ENCODE measurements at regions of chr20 and their contacts with region 1.

Region 1: DNA sequence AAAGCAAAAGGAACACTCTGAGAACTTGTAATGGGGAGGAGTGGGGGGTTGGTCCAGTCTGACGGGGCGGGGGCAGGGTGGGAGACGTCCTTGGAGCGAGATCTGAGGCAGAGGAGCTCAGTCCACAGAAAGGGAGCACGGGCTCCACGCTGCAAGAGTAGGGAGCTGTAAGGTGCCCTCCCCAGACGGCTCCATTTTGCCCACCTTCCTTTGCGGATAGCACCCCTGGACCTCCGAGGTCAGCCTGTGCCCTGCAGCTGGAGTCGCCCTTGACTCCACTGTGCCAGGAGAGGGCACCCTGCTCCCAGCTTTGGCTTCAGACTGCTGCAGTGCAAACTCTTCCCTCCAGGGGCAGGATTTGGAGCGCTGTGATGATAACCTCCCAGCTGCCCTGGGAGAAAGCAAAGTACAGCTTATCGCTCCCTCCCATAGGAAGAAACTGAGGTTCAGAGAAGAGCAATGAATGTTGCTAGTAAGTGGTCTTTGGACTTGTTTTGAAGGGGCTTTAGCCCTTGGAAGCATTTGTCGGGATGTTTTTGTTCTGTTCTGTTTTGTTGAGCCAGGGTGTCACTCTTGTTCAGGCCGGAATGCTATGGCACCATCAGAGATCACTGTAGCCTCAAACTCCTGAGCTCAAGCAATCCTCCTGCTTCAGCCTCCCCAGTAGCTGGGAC is 9.5 kb upstream of the AHCY start:
- DNase-seq: peak; percentile 92
- ATAC-seq: peak; percentile 100
- H3K4me3 Mint-ChIP-seq: no peak overlapping the region
- H3K27ac Mint-ChIP-seq: no peak overlapping the region
- H3K4me1 Mint-ChIP-seq: peaks cover 17% of the 10 kb centered on the region
- H3K27me3 Mint-ChIP-seq: peaks cover 27% of the 10 kb centered on the region

Region 2: DNA sequence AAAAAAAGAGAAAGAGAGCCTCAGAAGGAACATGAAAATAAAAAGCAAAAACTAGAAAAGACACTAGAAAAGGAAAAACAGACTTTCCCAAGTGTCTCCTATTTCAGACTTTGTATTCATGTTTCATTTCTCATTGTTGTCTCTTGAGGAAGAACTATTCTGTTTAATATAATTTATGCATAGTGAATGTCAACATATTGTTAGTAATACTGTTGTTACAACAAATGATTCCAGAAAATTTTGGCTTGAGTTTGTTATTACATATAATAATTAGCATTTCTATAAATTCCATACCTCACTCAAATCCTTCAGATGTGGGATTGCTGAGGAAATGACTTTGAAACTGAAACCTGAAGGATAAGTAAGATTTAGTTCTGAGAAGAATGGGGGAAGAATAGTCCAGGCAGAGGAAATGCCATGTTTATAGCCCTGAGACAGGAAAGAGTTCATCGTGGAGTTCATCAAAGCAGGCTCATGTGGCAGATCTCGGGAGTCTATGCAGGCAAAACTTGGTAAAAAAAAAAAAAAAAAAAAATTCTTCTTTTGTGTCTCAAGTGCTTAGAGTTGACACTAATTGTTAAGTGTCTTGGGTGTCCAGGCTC is 147.6 kb before region 1 on chr20:
- CTCF ChIA-PET with region 1: no interaction called
- DNase-seq: no peak
- ATAC-seq: no peak
- H3K4me3 Mint-ChIP-seq: no peak overlapping the region
- H3K27ac Mint-ChIP-seq: no peak overlapping the region
- H3K4me1 Mint-ChIP-seq: peaks cover 4% of the 10 kb centered on the region
- H3K27me3 Mint-ChIP-seq: peaks cover 11% of the 10 kb centered on the region

Region 3: DNA sequence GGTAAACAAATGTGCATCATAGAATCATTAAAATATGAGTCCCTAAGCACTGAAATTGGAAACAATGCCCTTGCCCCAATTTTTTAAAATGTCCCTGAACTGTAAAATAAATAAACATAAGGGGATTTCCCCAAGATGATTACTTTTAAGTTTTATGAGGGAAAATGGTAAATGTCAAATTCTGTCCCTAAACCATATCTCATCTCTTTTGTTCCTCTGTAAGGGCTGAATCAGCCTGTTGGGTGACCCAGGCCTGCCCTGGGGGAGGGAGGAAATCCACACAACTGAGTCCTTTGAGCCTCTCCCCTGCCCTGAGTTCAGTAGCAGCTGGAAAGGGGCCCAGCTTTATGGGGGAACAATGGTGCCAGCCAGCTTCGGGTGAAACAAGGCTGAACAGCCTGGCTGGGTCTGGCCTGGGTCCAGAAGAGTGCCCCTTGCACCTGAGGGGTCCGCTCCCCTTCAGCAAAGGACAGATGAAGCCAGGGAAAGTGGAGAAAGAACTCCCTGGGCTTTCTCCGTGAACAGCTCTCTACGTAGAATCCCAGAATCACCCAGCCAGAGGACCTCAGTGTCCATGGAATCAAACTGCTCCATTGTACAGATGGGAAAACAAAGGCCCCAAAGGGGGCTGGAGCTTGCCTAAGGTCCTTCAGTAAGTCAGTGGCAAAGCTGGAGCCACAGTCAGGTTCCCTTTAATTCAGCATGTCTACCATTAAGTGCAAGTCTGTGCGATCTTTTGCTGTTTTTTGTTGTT is 22.1 kb after region 1 on chr20:
- CTCF ChIA-PET with region 1: interaction called, 10 read pairs
- DNase-seq: no peak
- ATAC-seq: no peak
- H3K4me3 Mint-ChIP-seq: no peak overlapping the region
- H3K27ac Mint-ChIP-seq: no peak overlapping the region
- H3K4me1 Mint-ChIP-seq: peaks cover 5% of the 10 kb centered on the region
- H3K27me3 Mint-ChIP-seq: no peaks in the 10 kb centered on the region

Region 4: GRCh38 chr20:34403908-34404307 is 91.2 kb after region 1 on chr20:
- CTCF ChIA-PET with region 1: interaction called, 21 read pairs
- DNase-seq: no peak
- ATAC-seq: no peak
- H3K4me3 Mint-ChIP-seq: no peak overlapping the region
- H3K27ac Mint-ChIP-seq: no peak overlapping the region
- H3K4me1 Mint-ChIP-seq: peaks cover 30% of the 10 kb centered on the region
- H3K27me3 Mint-ChIP-seq: no peaks in the 10 kb centered on the region

Region 5: DNA sequence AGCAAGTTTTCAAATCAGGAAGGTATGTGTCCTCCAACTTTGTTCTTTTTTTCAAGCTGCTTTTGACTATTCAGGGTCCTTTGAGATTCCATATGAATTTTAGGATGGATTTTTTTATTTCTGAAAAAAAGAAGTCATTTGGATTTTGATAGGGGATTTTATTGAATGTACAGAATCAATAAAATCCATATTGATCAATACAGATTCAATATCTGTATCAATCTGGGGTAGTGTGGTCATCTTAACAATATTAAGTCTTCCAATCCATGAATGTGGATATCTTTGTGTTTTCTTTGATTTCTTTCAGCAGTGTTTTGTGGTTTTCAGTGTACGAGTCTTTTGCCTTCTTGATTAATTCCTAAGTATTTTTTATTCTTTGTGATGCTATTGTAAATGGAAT is 152.6 kb after region 1 on chr20:
- CTCF ChIA-PET with region 1: interaction called, 16 read pairs
- DNase-seq: no peak
- ATAC-seq: no peak
- H3K4me3 Mint-ChIP-seq: no peak overlapping the region
- H3K27ac Mint-ChIP-seq: no peak overlapping the region
- H3K4me1 Mint-ChIP-seq: peaks cover 2% of the 10 kb centered on the region
- H3K27me3 Mint-ChIP-seq: no peaks in the 10 kb centered on the region

Region 6: GRCh38 chr20:34516247-34517113 is 203.8 kb after region 1 on chr20 and contains the start of gene DYNLRB1:
- CTCF ChIA-PET with region 1: interaction called, 110 read pairs
- DNase-seq: peak; percentile 98
- ATAC-seq: peak; percentile 89
- H3K4me3 Mint-ChIP-seq: peak within 1 kb of the TSS; percentile 96
- H3K27ac Mint-ChIP-seq: peak within 1 kb of the TSS; percentile 97
- H3K4me1 Mint-ChIP-seq: peaks cover 28% of the 10 kb centered on the region
- H3K27me3 Mint-ChIP-seq: no peaks in the 10 kb centered on the region
- total RNA-seq, gene DYNLRB1: 88.5 to 93.6 TPM

Region 7: DNA sequence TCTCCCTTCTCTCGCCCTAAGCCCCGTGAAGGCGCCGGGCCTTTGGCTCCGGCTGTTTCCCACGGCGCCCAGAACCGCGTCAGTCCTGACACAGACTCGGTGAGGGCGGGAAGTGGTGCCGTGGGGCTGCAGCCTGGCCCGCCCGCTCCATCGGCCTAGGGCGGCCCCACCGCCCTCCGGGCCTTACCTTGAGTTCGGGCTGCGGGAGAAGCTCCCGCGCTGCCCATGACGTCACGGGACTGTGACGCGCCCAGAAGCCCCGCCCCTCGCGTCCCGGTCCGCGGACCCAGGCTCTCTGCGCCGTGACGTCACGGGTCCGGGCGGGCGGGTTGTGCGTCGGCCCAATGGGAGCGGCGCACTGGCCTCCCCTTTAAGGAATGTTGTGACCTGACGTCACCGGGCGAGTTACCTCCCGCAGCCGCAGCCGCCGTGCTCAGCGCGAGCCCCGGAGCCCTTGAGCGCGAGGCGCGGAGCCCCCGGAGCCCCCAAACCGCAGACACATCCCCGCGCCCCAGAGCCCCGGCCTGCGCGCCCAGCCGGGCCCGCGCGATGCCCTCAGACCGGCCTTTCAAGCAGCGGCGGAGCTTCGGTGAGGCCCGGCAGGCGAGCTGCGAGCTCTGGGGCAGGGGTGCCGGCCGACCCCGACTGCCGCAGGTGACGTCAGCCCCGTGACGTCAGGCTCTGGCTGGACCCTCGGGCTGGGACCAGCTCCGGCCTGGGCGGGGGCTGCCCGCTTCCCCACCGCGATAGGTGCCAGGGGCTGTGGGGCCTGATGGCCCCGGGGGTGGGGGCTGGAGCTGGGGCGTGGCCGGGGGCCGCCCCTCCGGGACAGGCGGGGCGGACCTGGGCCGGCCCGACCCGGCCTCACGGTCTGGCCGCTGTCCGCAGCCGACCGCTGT is 245.9 kb after region 1 on chr20 and contains the start of gene MAP1LC3A:
- CTCF ChIA-PET with region 1: interaction called, 10 read pairs
- DNase-seq: peak; percentile 96
- ATAC-seq: peak; percentile 92
- H3K4me3 Mint-ChIP-seq: peak within 1 kb of the TSS; percentile 78
- H3K27ac Mint-ChIP-seq: peak within 1 kb of the TSS; percentile 83
- H3K4me1 Mint-ChIP-seq: peaks cover 9% of the 10 kb centered on the region
- H3K27me3 Mint-ChIP-seq: no peaks in the 10 kb centered on the region
- total RNA-seq, gene MAP1LC3A: 4.7 to 5.2 TPM